ENCODE measurements at regions of chr7 and their contacts with region 1.

Region 1: DNA sequence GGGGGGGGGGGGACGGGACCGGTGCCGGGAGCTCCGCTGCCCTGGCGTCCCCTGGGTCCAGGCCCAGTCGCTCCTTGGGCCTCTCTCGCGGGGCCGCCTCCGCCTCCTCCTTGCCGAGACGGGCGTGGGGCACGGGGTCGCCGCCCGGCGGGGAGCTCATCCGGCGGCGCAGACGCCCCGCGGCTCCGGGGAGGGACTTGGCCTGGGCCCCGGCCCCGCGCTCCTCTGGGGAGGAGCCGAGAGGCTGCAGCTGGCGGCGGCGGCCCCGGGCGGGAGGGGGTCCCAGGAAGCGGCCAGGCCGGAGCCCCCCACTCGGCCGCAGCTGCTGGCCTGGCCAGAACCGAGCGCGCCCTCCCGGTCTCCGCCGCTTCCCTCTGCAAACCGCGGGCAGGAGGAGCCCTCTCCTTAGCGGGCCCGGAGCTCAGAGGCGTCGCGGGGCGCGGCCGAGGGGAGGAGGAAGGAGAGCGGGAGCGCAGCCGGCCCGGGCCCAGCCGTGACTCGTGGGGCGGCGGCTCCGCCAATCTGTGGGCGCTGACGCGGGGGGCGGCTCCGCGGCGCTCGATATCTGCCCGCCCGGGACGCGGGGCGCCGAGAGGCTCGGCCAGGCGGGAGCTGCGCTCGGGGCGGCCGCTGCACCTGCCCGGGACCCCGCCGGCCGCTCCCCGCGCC is at the start of gene FAM20C:
- DNase-seq: peak; percentile 88 to 94 (median 89)
- ATAC-seq: peak; percentile 77 to 89 (median 87)
- H3K4me3 ChIP-seq: peak within 1 kb of the TSS; percentile 59 to 96 (median 74)
- H3K27ac ChIP-seq: peak within 1 kb of the TSS; percentile 68 to 96 (median 91)
- H3K4me1 ChIP-seq: peaks cover 0 to 53% (median 29%) of the 10 kb centered on the region in 12 donors
- H3K27me3 ChIP-seq: peaks cover 0 to 7% (median 0%) of the 10 kb centered on the region in 9 donors
- CTCF ChIP-seq: peak in 1 of 12 donors; percentile 5
- POLR2A ChIP-seq: peak; percentile 80 to 91
- total RNA-seq, gene FAM20C: 16.7 to 52.0 (median 21.0) TPM

Region 2: DNA sequence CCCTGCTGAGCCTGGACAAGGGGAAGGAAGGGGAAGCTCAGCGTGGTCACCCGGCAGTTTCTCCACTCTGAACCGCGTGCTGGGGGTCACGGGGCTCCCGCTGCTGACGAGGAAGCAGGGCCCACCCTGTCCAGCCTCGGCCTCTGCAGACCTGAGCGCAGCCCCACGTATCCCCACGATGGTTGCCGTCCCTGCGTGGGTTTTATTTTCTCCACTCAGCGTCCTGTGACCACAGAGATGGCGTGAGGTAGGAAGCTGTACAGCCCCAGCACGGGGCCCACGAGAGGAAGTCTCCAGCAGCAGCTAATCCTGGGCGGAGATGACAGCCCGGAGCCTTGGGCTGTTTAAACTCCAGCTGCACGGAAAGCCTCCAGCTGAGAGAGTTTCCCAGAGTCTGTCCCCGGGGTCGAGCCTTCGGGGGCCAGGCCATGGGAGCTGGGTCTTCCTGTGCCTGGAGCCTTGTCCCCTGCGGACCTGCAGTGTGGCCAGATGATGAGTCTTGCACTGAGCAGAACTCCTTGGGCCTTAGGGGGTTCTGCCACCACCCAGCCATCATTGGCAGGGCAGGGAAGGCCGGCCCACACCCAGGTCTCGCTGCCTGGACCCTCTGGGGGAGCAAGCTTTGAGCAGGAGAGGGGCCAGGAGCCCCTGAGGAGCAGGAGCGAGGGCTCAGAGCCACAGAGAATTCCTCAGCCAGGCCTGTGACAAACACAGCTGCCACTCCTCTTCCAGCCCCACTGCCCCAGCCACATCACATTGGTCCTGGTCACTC is 72.5 kb before region 1 on chr7:
- intact Hi-C with region 1: no loop called
- DNase-seq: peak; percentile 56 to 77 (median 57)
- ATAC-seq: peak; percentile 46 to 82 (median 63)
- H3K4me3 ChIP-seq: peak overlapping the region in 1 of 12 donors; percentile 21
- H3K27ac ChIP-seq: peak overlapping the region in 11 of 12 donors; percentile 11 to 88 (median 44)
- H3K4me1 ChIP-seq: peaks cover 0 to 59% (median 11%) of the 10 kb centered on the region in 12 donors
- H3K27me3 ChIP-seq: peaks cover 0 to 19% (median 0%) of the 10 kb centered on the region in 9 donors
- CTCF ChIP-seq: no peak
- POLR2A ChIP-seq: no peak

Region 3: GRCh38 chr7:148932-149855 is 42.9 kb before region 1 on chr7:
- intact Hi-C with region 1: loop called (anchors 1 to 5 kb)
- DNase-seq: peak; percentile 98 to 99 (median 98)
- ATAC-seq: peak; percentile 94 to 98 (median 97)
- H3K4me3 ChIP-seq: peak overlapping the region; percentile 37 to 76 (median 60)
- H3K27ac ChIP-seq: peak overlapping the region; percentile 86 to 99 (median 94)
- H3K4me1 ChIP-seq: peaks cover 0 to 27% (median 14%) of the 10 kb centered on the region in 12 donors
- H3K27me3 ChIP-seq: no peaks in the 10 kb centered on the region
- CTCF ChIP-seq: peak in 2 of 12 donors; percentile 1 to 13
- POLR2A ChIP-seq: peak in 1 of 2 donors; percentile 67

Region 4: DNA sequence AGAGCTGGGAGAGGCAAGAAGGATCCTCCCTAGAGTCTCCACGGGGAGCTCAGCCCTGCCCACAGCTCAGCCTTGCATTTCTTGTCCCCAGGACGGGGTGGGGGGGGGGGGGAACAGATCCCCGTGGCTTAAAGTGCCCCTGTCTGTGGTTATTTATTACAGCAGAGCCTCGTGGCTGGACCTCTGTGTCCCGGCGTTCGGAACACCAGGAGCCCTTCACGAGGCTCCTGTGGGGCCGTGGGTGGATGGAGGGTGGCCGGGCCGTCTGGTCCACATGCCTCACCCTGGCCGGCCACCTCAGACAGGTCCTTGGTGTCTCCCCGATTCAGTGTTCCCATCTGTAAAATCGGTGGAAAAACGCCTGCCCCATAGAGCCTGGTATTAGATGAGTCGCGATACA is 38.2 kb after region 1 on chr7:
- intact Hi-C with region 1: loop called in 1 of 10 experiments (anchors 1 kb)
- DNase-seq: no peak
- ATAC-seq: no peak
- H3K4me3 ChIP-seq: no peak overlapping the region
- H3K27ac ChIP-seq: peak overlapping the region in 3 of 12 donors; percentile 42 to 87 (median 51)
- H3K4me1 ChIP-seq: peaks cover 0 to 70% (median 32%) of the 10 kb centered on the region in 12 donors
- H3K27me3 ChIP-seq: no peaks in the 10 kb centered on the region
- CTCF ChIP-seq: no peak
- POLR2A ChIP-seq: no peak